Right ventricle myocardium inferior (tissue), 1 donor: ENCODE measurements at regions of chr3 and their contacts with region 1.

Region 1: GRCh38 chr3:30084971-30085403 is 521.4 kb upstream of the TGFBR2 start:
- DNase-seq: no peak
- ATAC-seq: no peak

Region 2: DNA sequence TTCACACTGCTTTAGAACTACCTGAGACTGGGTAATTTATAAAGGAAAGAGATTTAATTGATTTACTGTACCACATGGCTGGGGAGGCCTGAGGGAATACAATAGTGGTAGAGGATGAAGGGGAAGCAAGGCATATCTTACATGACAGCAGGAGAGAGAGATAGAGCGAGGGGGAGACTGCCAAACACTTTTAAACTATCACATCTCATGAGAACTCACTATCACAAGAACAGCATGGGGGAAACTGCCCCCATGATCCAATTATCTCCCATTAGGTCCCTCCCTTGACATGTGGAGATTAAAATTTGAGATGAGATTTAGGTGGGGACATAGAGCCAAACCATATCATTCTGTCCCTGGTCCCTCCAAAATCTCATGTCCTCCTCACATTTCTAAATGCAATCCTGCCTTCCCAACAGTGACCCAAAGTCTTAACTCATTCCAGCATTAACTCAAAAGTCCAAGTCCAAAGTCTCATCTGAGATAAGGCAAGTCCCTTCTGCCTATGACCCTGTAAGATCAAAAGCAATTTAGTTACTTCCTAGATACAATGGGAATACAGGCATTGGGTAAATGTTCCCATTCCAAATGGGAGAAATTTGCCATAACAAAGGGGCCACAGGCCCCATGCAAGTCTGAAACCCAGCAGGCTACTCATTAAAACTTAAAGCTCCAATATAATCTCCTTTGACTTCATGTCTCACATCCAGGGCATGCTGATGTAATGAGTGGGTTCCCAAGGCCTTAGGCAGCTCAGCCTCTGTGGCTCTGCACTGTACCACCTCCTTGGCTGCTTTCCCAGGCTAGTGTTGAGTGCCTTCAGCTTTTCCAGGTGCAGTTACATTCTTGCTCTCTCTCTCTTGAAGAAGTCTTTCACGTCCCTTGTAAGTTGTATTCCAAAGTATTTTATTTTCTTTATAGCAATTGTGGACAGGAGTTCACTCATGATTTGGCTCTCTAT is 39.7 kb after region 1 on chr3:
- intact Hi-C with region 1: loop called (anchors 2 kb)
- DNase-seq: no peak
- ATAC-seq: peak; percentile 37